Esophagus squamous epithelium (tissue), 5 donors: ENCODE measurements at regions of chr17 and their contacts with region 1.

Region 1: GRCh38 chr17:6421700-6422604 is 13.0 kb downstream of the AIPL1 start:
- DNase-seq: peak; percentile 10
- H3K4me3 ChIP-seq: no peak overlapping the region
- H3K27ac ChIP-seq: no peak overlapping the region
- H3K4me1 ChIP-seq: peaks cover 0 to 6% (median 0%) of the 10 kb centered on the region in 3 donors
- H3K27me3 ChIP-seq: peaks cover 0 to 58% (median 0%) of the 10 kb centered on the region in 4 donors
- CTCF ChIP-seq: peak; percentile 24 to 84 (median 80)
- POLR2A ChIP-seq: no peak

Region 2: GRCh38 chr17:5584383-5585286 is 837.3 kb before region 1 on chr17 and contains the start of gene NLRP1:
- intact Hi-C with region 1: loop called (anchors 5 kb)
- DNase-seq: peak; percentile 71
- H3K4me3 ChIP-seq: peak within 1 kb of the TSS; percentile 40 to 69 (median 53)
- H3K27ac ChIP-seq: peak within 1 kb of the TSS; percentile 87 to 95 (median 92)
- H3K4me1 ChIP-seq: peaks cover 31 to 57% (median 36%) of the 10 kb centered on the region in 3 donors
- H3K27me3 ChIP-seq: no peaks in the 10 kb centered on the region
- CTCF ChIP-seq: no peak
- POLR2A ChIP-seq: peak in 3 of 4 donors; percentile 21 to 90 (median 79)
- total RNA-seq, gene NLRP1: 10.4 to 33.4 (median 14.3) TPM

Region 3: GRCh38 chr17:6361731-6362130 is 60.2 kb before region 1 on chr17:
- intact Hi-C with region 1: no loop called
- DNase-seq: no peak
- H3K4me3 ChIP-seq: no peak overlapping the region
- H3K27ac ChIP-seq: no peak overlapping the region
- H3K4me1 ChIP-seq: peaks cover 0 to 11% (median 0%) of the 10 kb centered on the region in 3 donors
- H3K27me3 ChIP-seq: peaks cover 0 to 36% (median 0%) of the 10 kb centered on the region in 4 donors
- CTCF ChIP-seq: no peak
- POLR2A ChIP-seq: no peak

Region 4: DNA sequence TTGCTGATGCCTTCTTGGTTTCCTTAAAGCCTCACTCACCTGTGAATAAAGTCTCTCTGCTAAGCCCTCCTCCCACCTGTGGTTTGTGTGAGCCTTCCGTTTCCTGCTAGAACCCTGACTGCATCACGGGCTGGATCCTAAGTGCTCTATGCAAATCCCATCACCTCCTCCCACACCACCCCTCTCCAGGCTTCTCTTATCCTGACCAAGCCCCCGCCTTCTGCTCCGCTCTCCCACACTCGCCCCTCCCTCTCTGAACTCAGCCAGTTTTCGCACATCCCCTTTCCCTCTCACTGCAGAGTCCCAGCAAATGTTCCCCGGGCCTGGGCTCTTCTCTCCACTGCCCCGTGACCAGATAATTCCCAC is 74.1 kb after region 1 on chr17:
- intact Hi-C with region 1: no loop called
- DNase-seq: no peak
- H3K4me3 ChIP-seq: no peak overlapping the region
- H3K27ac ChIP-seq: no peak overlapping the region
- H3K4me1 ChIP-seq: peaks cover 0 to 39% (median 0%) of the 10 kb centered on the region in 3 donors
- H3K27me3 ChIP-seq: no peaks in the 10 kb centered on the region
- CTCF ChIP-seq: no peak
- POLR2A ChIP-seq: no peak

Region 5: GRCh38 chr17:6660805-6661463 is 239.0 kb after region 1 on chr17:
- intact Hi-C with region 1: no loop called
- DNase-seq: no peak
- H3K4me3 ChIP-seq: no peak overlapping the region
- H3K27ac ChIP-seq: no peak overlapping the region
- H3K4me1 ChIP-seq: peaks cover 0 to 24% (median 0%) of the 10 kb centered on the region in 3 donors
- H3K27me3 ChIP-seq: peaks cover 0 to 44% (median 0%) of the 10 kb centered on the region in 4 donors
- CTCF ChIP-seq: no peak
- POLR2A ChIP-seq: no peak